ENCODE measurements at regions of chr1 and their contacts with region 1.

Region 1: DNA sequence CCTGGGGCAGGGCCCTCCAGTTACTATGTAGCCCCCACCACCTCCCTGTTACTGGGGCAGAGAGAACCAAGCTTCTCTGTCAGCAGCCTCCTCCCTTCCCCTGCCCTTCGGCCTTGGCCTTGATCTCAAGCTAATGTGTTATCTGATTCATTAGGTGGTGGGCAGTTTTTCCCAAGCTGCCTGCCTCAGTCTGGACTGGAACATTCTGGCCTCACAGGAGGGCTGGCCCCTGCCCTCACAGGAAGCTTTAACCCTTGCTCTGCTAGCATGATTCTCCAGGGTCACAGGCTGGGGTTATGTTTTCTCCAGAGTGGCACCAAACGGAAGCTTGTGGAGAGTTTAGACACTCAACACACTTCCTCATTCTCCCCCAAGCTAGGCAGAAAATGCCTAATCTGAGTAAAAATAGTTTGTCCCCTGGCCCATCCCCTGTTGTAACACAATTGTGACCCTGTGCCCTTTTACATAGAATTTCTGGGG is 37.2 kb upstream of the SLC6A9 start:
- DNase-seq: no peak
- H3K4me3 ChIP-seq: no peak overlapping the region
- CTCF ChIP-seq: no peak

Region 2: DNA sequence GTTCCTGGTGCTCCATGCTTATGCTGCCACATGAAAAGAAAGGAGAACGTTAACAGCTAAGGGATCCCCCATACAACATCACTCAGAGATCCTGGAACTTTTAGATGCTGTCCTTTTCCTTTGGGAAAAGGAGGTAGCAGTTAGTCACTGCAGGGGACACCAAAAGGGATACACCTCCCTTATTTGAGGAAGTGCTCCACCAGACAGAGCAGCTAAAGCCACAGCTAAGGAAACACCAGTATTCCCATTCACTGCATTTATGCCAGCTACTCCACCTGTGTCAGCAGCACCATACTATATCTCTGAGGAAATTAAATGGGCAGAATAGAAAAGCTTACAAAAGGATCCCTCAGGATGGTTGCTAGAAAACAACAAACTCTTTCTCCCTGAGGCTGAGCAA is 11.2 kb before region 1 on chr1:
- CTCF ChIA-PET with region 1: interaction called, 12 read pairs
- POLR2A ChIA-PET with region 1: no interaction called
- DNase-seq: no peak
- H3K4me3 ChIP-seq: no peak overlapping the region
- CTCF ChIP-seq: no peak

Region 3: DNA sequence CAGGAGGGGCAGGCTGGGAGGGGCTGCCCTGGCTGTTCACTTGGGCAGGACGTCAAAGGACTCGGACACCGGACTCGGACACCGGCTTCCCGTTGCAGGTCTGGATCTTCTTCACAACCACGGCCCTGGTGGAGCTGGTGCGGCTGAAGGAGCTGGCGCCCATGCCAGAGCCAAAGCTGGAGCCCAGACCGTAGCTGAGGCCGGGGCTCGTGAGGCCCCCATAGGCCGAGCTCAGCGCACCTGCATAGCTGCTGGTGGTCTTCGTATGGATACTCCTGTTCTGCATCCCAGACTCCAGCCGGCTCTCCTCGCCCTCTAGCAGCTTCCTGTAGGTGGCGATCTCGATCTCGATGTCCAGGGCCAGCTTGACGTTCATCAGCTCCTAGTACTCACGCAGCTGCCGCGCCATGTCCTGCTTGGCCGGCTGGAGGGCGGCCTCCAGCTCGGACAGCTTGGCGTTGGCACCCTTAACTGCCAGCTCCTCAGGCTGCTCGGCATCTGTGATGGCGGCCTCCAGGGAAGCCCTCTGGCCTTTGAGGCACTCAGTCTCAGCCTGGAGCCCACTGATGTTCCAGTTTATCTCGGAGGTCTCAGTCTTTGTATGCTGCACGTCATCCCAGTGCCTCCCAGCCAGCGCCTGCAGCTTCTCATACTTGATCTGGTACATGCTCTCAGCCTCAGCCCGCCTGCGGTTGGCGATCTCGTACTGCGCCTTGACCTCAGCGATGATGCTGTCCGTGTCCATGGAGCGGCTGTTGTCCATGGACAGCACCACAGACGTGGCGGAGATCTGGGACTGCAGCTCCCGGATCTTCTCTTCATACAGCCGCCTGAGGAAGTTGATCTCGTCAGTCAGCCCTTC is 35.0 kb after region 1 on chr1:
- CTCF ChIA-PET with region 1: no interaction called
- POLR2A ChIA-PET with region 1: no interaction called
- DNase-seq: no peak
- H3K4me3 ChIP-seq: no peak overlapping the region
- CTCF ChIP-seq: peak; percentile 27

Region 4: DNA sequence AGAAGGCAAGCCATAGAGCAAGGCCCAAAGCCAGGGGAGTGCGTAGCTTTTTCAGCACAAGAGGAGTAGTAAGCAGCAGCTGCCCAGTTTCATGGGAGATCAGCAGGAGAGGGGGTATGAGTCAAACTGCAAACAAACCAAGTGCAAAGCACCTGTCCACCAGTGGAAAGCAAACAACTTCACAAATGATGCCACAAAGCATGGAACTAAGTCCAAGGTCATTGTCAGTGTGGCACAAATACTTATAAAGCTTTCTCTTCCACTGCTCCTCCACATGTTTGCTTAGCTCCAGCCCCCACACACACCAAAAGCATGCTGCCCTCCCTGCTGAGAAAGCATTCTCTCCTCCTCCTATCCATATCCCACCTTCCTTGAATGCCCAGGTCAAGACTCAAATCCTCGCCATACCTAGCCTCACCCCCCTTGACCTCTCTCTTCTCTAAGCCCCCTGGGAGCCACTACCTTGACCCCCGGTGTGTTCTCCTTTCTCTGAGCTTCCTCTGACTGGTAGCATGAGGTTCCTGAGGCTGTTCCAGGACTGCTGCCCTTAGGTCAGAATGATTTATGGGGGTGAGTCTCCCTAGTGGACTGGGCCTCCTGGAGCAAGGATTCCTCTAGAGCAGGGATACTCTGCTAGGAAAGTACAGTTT is 215.2 kb after region 1 on chr1:
- CTCF ChIA-PET with region 1: no interaction called
- POLR2A ChIA-PET with region 1: no interaction called
- DNase-seq: no peak
- H3K4me3 ChIP-seq: no peak overlapping the region
- CTCF ChIP-seq: no peak

Region 5: DNA sequence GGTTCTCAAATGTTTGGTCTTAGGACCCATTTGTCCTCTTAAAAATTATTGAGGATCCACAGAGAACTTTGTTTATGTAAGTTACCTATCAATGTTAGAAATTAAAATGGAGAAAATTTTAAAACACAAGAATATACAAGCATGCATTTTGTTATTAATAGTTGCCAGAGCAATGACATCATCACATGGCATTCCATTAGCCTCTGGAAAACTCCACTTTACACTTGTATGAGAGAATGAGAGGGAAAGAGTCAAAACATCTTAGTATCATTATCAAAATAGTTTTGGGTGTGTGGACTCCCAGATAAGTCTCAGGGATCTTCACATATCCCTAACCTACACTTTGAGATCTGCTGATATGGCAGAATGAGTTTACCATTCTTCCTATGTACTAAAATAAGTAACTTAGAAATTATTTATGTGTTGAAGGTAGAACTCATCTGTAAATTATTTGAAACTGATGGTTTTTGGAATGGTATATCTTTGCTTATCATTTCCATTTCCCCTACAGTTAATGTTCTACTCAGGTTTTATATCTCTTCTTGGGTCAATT is 385.4 kb after region 1 on chr1:
- CTCF ChIA-PET with region 1: no interaction called
- POLR2A ChIA-PET with region 1: no interaction called
- DNase-seq: no peak
- H3K4me3 ChIP-seq: no peak overlapping the region
- CTCF ChIP-seq: no peak

Region 6: GRCh38 chr1:44739361-44740178 is 671.1 kb after region 1 on chr1 and contains the start of gene KIF2C:
- CTCF ChIA-PET with region 1: no interaction called
- POLR2A ChIA-PET with region 1: no interaction called
- DNase-seq: peak; percentile 78
- H3K4me3 ChIP-seq: peak within 1 kb of the TSS; percentile 92
- CTCF ChIP-seq: no peak